ENCODE measurements at regions of chr2 and their contacts with region 1.

Region 1: GRCh38 chr2:183078465-183079138 is at the start of gene DUSP19:
- DNase-seq: peak; percentile 95
- ATAC-seq: peak; percentile 95
- H3K4me3 ChIP-seq: peak within 1 kb of the TSS; percentile 69 to 88 (median 79)
- H3K27ac ChIP-seq: peak within 1 kb of the TSS; percentile 37
- H3K4me1 ChIP-seq: peaks cover 19% of the 10 kb centered on the region
- H3K27me3 ChIP-seq: peaks cover 0 to 24% of the 10 kb centered on the region in 2 experiments; a peak in 2 of 5 replicates
- CTCF ChIP-seq: 0 out of 2 replicates have a peak, but pooled peaks have one; percentile 4
- EP300 ChIP-seq: no peak
- POLR2A ChIP-seq: peak; percentile 82 to 98
- RAD21 ChIP-seq: no peak
- total RNA-seq, gene DUSP19: 1.9 and 3.9 TPM in 2 replicates

Region 2: GRCh38 chr2:182717416-182717815 is 361.2 kb before region 1 on chr2:
- CTCF ChIA-PET with region 1: no interaction called
- POLR2A ChIA-PET with region 1: no interaction called
- in situ Hi-C with region 1: no loop called
- intact Hi-C with region 1: no loop called
- DNase-seq: no peak
- ATAC-seq: no peak
- H3K4me3 ChIP-seq: peak overlapping the region; percentile 22 to 100 (median 98); a peak in 5 of 6 replicates
- H3K27ac ChIP-seq: peak overlapping the region; percentile 81
- H3K4me1 ChIP-seq: peaks cover 27% of the 10 kb centered on the region
- H3K27me3 ChIP-seq: no peaks in the 10 kb centered on the region; a peak in 1 of 5 replicates
- CTCF ChIP-seq: no peak
- EP300 ChIP-seq: no peak
- POLR2A ChIP-seq: no peak
- RAD21 ChIP-seq: no peak

Region 3: DNA sequence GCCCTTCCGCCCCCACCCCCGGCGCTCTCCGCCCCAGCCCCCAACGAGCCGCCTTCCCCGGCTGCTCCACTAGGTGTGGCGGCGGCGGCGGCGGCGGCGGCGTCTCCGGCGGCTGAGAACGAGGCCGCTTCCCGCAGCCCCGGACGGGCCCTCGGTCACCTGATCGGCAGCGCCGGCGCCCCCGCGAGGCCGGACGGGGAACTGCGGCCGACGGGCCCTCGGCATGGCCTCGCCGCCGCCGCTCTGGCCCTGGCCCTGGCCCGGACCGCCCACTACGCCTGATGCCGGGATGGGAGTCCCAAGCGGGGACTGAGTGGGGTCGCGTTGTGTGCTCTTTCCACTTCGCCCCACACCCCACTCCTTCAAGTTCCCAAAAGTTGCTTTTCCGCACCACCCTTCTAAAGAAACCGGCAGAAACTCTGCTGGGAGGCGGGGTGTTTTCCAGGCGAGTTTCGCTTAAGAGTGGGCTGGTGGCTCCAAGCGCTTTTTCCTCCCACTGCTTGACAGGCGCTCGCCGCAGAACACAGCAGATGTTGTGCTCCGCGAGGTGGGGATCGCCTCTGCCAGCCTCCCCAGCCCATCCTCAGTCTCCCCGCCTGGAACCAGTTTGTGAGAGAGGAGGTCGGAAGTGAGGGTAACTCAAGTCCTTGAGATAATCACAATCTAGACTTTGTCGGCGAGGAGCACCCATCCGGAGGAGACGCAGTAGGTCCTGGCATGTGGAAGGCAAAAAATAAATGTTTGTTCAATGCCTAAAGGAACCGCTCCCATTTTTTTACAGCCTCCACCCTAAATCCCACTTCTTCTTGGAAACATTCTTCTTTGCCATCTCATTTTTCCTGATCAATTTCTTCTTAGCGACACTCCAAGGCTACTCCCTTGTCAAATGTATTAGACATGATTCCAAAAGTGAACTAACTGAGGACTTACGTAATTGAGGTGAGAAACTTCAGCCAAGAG is 40.0 kb before region 1 on chr2 and contains the start of gene NCKAP1:
- CTCF ChIA-PET with region 1: no interaction called
- POLR2A ChIA-PET with region 1: no interaction called
- in situ Hi-C with region 1: no loop called
- intact Hi-C with region 1: loop called (anchors 2 kb)
- DNase-seq: peak; percentile 76
- ATAC-seq: peak; percentile 92
- H3K4me3 ChIP-seq: peak within 1 kb of the TSS; percentile 79 to 99 (median 98)
- H3K27ac ChIP-seq: peak within 1 kb of the TSS; percentile 92
- H3K4me1 ChIP-seq: peaks cover 38% of the 10 kb centered on the region
- H3K27me3 ChIP-seq: peaks cover 2 to 13% of the 10 kb centered on the region in 2 experiments; a peak in 3 of 5 replicates
- CTCF ChIP-seq: peak; percentile 79
- EP300 ChIP-seq: peak in 1 of 2 experiments; percentile 17; a peak in 1 of 4 replicates
- POLR2A ChIP-seq: no peak
- RAD21 ChIP-seq: peak; percentile 88
- total RNA-seq, gene NCKAP1: 96.3 and 160 TPM in 2 replicates

Region 4: GRCh38 chr2:183057333-183057985 is 21.1 kb before region 1 on chr2:
- CTCF ChIA-PET with region 1: no interaction called
- POLR2A ChIA-PET with region 1: no interaction called
- in situ Hi-C with region 1: no loop called
- intact Hi-C with region 1: loop called (anchors 1 kb)
- DNase-seq: no peak
- ATAC-seq: peak; percentile 25
- H3K4me3 ChIP-seq: peak overlapping the region in 1 of 3 experiments; percentile 18; a peak in 2 of 6 replicates
- H3K27ac ChIP-seq: peak overlapping the region; percentile 64
- H3K4me1 ChIP-seq: peaks cover 47% of the 10 kb centered on the region
- H3K27me3 ChIP-seq: 0 out of 5 replicates have a peak, but pooled peaks cover 0 to 1% of the 10 kb centered on the region in 2 experiments
- CTCF ChIP-seq: no peak
- EP300 ChIP-seq: no peak
- POLR2A ChIP-seq: no peak
- RAD21 ChIP-seq: no peak

Region 5: GRCh38 chr2:183124222-183124956 is 45.8 kb after region 1 on chr2 and contains the start of gene NUP35:
- CTCF ChIA-PET with region 1: no interaction called
- POLR2A ChIA-PET with region 1: interaction called, 17 read pairs
- in situ Hi-C with region 1: no loop called
- intact Hi-C with region 1: loop called (anchors 1 kb)
- DNase-seq: peak; percentile 93
- ATAC-seq: peak; percentile 93
- H3K4me3 ChIP-seq: peak within 1 kb of the TSS; percentile 81 to 90 (median 87)
- H3K27ac ChIP-seq: peak within 1 kb of the TSS; percentile 87
- H3K4me1 ChIP-seq: peaks cover 34% of the 10 kb centered on the region
- H3K27me3 ChIP-seq: no peaks in the 10 kb centered on the region; a peak in 1 of 5 replicates
- CTCF ChIP-seq: no peak
- EP300 ChIP-seq: peak; percentile 39 to 68; a peak in 2 of 4 replicates
- POLR2A ChIP-seq: peak; percentile 83 to 91
- RAD21 ChIP-seq: 0 out of 2 replicates have a peak, but pooled peaks have one; percentile 15
- total RNA-seq, gene NUP35: 53.6 and 74.2 TPM in 2 replicates

Region 6: DNA sequence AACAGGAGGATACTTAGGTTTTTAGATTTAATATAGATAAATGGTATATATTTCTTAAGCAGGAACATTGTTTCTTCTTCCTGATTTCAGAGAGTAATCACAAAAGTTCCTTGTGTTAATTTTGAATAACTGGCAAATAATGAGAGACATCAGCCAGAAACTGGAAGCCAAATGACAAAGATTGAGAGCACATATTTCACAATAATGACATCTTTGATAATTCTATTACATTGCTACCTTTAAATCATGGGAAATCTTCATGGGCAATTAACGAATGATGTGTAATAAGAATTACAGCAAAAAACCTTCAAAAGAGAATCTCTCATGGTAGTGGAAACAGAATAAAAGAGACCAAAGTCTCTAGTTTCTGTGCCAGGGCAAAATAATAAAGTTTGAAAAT is 260.7 kb after region 1 on chr2:
- CTCF ChIA-PET with region 1: no interaction called
- POLR2A ChIA-PET with region 1: no interaction called
- in situ Hi-C with region 1: no loop called
- intact Hi-C with region 1: no loop called
- DNase-seq: no peak
- ATAC-seq: no peak
- H3K4me3 ChIP-seq: no peak overlapping the region
- H3K27ac ChIP-seq: no peak overlapping the region
- H3K4me1 ChIP-seq: no peaks in the 10 kb centered on the region
- H3K27me3 ChIP-seq: no peaks in the 10 kb centered on the region
- CTCF ChIP-seq: no peak
- EP300 ChIP-seq: no peak
- POLR2A ChIP-seq: no peak
- RAD21 ChIP-seq: no peak

Measured in HepG2 (cell line).